ENCODE measurements at regions of chr11 and their contacts with region 1.

Region 1: GRCh38 chr11:35995681-35996271 is 51.9 kb downstream of the LDLRAD3 start:
- DNase-seq: no peak
- ATAC-seq: no peak

Region 2: DNA sequence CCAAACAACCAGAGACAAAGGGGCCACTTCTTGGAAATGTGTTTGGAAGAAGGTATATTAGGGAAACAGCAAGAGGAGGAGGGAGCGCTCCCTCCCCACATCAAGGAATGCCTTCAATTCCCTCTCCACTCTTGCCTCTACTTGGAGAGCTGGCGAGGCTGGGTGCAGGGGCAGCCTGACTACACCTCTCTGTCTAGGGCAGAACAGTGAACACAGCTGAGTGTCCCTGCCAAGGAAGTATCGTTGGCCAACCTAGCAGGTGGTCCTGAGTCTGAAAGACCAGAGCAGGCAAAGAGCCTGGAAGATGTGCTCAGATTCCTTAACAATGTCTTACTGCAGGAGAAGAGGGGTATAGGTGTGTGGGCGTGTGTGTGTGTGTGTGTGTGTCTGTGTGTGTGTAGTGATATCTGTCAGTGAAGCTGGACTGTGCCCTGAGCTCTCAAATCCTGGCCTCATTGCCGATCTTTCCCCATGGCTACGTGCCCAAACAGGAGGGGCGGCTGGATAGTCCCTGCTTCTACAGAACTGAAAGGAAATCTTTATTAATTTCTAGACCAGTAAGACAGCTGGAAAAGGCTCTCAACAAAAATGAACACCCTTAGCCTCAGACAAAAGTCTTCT is 517.2 kb before region 1 on chr11:
- intact Hi-C with region 1: no loop called
- DNase-seq: peak; percentile 63
- ATAC-seq: peak; percentile 72

Region 3: GRCh38 chr11:35953081-35953760 is 42.6 kb before region 1 on chr11:
- intact Hi-C with region 1: no loop called
- DNase-seq: no peak
- ATAC-seq: no peak

Region 4: DNA sequence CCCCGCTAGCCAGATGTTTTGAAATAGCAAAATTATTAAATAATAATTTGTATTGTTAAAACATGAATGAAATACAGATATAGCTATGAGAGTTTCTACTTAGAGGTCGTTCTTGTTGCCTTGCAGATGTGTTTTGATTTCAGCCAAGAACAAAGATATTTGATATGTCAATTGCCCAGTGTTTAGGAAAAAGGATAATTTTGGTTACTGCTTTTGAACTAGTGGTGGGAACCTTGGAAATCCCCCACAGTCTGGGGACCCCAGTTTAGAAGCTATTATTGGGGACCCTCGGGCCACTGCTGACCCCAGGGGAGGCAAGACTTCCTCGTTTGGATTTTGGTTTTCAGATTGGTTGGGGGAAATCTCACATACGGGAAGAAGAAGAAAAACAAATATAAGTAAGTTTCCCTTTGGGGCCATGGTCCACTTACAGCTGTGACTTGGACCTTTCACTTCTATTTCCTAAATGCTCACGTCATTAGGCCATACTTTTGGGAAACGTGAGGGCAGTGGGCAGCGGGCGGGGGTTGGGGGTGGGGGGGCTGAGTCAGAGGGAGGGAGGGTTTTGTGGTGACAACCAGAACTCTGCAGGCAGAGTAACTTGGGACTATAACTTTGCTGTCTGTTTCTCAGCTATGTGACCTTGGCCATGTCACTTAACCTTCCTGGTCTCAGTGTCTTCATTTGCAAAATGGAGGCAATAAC is 14.9 kb before region 1 on chr11:
- intact Hi-C with region 1: no loop called
- DNase-seq: no peak
- ATAC-seq: peak; percentile 78

Region 5: DNA sequence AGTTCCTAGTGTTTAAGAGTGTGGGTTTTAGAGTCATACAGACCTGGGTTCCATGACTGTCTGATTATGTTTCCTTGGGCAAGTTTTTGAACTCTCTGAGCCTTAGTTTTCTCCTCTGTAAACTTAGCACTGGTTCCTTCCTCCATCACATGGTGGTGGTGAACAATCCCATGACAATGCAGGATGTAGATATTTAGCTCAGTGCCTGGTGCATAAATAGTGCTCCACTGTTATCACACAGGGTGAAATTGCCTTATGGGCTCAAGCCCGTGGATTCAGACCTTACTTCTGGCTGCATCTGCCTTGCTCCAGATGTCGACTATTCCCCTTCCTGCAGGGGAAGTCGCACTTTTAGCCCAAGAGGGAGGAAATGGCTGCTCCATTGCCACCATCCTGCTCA is 10.8 kb after region 1 on chr11:
- intact Hi-C with region 1: loop called (anchors 1 kb)
- DNase-seq: no peak
- ATAC-seq: no peak

Region 6: DNA sequence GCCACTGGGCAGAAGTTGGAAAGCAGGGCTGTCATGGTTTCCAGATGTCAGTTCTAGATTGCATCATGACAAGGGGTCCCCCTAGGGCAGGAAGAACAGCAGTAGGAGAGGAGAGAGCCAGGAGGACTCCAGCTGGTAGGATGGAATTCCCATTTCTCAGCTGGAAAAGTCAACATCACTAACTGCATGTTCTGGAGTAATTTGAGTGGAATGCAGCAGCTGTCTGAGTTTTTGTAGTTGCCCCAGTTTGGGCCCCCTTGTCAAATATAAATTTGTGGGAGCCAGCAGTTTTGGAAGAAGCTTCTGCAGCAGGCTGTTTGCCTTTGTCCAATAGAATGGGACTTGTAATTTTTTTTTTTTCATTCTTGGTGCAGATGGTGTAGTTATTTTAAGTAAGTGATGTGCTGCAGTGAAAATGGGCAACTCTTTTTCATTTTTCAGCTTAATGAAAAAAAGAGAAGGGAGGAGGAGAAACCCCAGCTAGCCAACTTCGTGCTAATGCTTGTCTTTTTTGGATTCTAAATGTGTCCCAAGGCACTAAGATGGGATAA is 35.0 kb after region 1 on chr11:
- intact Hi-C with region 1: no loop called
- DNase-seq: no peak
- ATAC-seq: peak; percentile 87